HepG2 (cell line): ENCODE measurements at regions of chr1 and their contacts with region 1.

Region 1: GRCh38 chr1:227437495-227438008 is 119.3 kb upstream of the CDC42BPA start:
- DNase-seq: peak; percentile 25
- ATAC-seq: peak; percentile 67; the same call in 2 of the 3 replicates
- H3K4me3 ChIP-seq: peak overlapping the region in 1 of 3 experiments; percentile 37; a peak in 1 of 6 replicates
- H3K27ac ChIP-seq: no peak overlapping the region
- H3K4me1 ChIP-seq: peaks cover 8% of the 10 kb centered on the region; the same call in 1 of the 2 replicates
- H3K27me3 ChIP-seq: peaks cover 0 to 17% of the 10 kb centered on the region in 2 experiments; a peak in 1 of 5 replicates
- CTCF ChIP-seq: peak; percentile 65
- EP300 ChIP-seq: no peak
- POLR2A ChIP-seq: no peak
- RAD21 ChIP-seq: peak; percentile 49; the same call in 1 of the 2 replicates

Region 2: GRCh38 chr1:226634166-226634588 is 803.4 kb before region 1 on chr1:
- CTCF ChIA-PET with region 1: interaction called, 5 read pairs
- POLR2A ChIA-PET with region 1: no interaction called
- in situ Hi-C with region 1: loop called (anchors 10 kb)
- intact Hi-C with region 1: loop called (anchors 10 kb)
- DNase-seq: peak; percentile 35
- ATAC-seq: peak; percentile 90
- H3K4me3 ChIP-seq: no peak overlapping the region
- H3K27ac ChIP-seq: no peak overlapping the region
- H3K4me1 ChIP-seq: no peaks in the 10 kb centered on the region
- H3K27me3 ChIP-seq: peaks cover 0 to 57% of the 10 kb centered on the region in 2 experiments; a peak in 4 of 5 replicates
- CTCF ChIP-seq: peak; percentile 88
- EP300 ChIP-seq: no peak
- POLR2A ChIP-seq: no peak
- RAD21 ChIP-seq: peak; percentile 71

Region 3: DNA sequence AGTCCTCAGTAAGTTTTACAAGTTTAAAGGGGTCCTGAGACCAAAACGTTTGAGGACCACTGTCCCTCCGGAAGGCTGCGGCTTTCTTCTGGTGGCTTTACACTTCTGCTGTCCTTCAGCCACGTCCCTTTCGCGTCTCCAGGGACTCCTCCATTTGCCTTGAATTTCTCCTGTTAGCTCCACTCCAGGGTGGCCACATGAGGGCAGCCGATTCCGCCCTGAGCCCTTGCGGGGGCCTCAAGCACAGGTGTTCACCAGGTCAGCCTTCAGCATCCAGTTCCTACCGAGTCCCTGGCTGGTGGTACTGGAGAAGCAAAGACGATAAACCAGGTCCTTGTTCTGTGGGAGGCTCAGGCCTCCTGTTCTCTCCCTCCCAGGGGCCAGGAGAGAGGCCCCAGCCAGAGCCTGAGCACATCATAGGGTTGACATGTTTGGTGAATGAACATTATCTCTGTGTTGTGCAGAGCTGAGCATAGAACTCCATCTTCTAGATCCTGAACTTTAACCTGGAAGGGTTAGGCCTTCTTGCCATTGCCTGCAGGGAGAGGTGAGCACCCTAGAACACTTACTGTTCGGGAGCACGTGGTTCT is 524.9 kb before region 1 on chr1:
- CTCF ChIA-PET with region 1: interaction called, 6 read pairs
- POLR2A ChIA-PET with region 1: no interaction called
- in situ Hi-C with region 1: loop called (anchors 5 kb)
- intact Hi-C with region 1: loop called (anchors 5 kb)
- DNase-seq: peak; percentile 76
- ATAC-seq: peak; percentile 100
- H3K4me3 ChIP-seq: no peak overlapping the region
- H3K27ac ChIP-seq: no peak overlapping the region
- H3K4me1 ChIP-seq: peaks cover 7% of the 10 kb centered on the region
- H3K27me3 ChIP-seq: no peaks in the 10 kb centered on the region
- CTCF ChIP-seq: peak; percentile 100
- EP300 ChIP-seq: no peak
- POLR2A ChIP-seq: no peak
- RAD21 ChIP-seq: peak; percentile 93

Region 4: GRCh38 chr1:227131193-227131592 is 306.4 kb before region 1 on chr1:
- CTCF ChIA-PET with region 1: interaction called, 5 read pairs
- POLR2A ChIA-PET with region 1: no interaction called
- in situ Hi-C with region 1: no loop called
- intact Hi-C with region 1: loop called (anchors 1 kb)
- DNase-seq: peak; percentile 30
- ATAC-seq: peak; percentile 65; the same call in 2 of the 3 replicates
- H3K4me3 ChIP-seq: no peak overlapping the region
- H3K27ac ChIP-seq: no peak overlapping the region
- H3K4me1 ChIP-seq: no peaks in the 10 kb centered on the region
- H3K27me3 ChIP-seq: no peaks in the 10 kb centered on the region
- CTCF ChIP-seq: peak; percentile 31
- EP300 ChIP-seq: no peak
- POLR2A ChIP-seq: no peak
- RAD21 ChIP-seq: no peak

Region 5: GRCh38 chr1:227234998-227235405 is 202.6 kb before region 1 on chr1:
- CTCF ChIA-PET with region 1: interaction called, 4 read pairs
- POLR2A ChIA-PET with region 1: no interaction called
- in situ Hi-C with region 1: loop called (anchors 5 kb)
- intact Hi-C with region 1: loop called (anchors 1 kb)
- DNase-seq: peak; percentile 83
- ATAC-seq: peak; percentile 97
- H3K4me3 ChIP-seq: no peak overlapping the region
- H3K27ac ChIP-seq: no peak overlapping the region
- H3K4me1 ChIP-seq: no peaks in the 10 kb centered on the region
- H3K27me3 ChIP-seq: no peaks in the 10 kb centered on the region
- CTCF ChIP-seq: peak; percentile 71
- EP300 ChIP-seq: no peak
- POLR2A ChIP-seq: no peak
- RAD21 ChIP-seq: peak; percentile 52; the same call in 1 of the 2 replicates

Region 6: GRCh38 chr1:227318003-227318852 is 119.3 kb before region 1 on chr1 and contains the start of gene CDC42BPA:
- CTCF ChIA-PET with region 1: no interaction called
- POLR2A ChIA-PET with region 1: no interaction called
- in situ Hi-C with region 1: loop called (anchors 5 kb)
- intact Hi-C with region 1: loop called (anchors 5 kb)
- DNase-seq: peak; percentile 46
- ATAC-seq: peak; percentile 85
- H3K4me3 ChIP-seq: peak within 1 kb of the TSS; percentile 89 to 96 (median 91)
- H3K27ac ChIP-seq: peak within 1 kb of the TSS; percentile 78
- H3K4me1 ChIP-seq: peaks cover 9% of the 10 kb centered on the region
- H3K27me3 ChIP-seq: peaks cover 0 to 17% of the 10 kb centered on the region in 2 experiments; a peak in 3 of 5 replicates
- CTCF ChIP-seq: no peak
- EP300 ChIP-seq: no peak
- POLR2A ChIP-seq: peak in 1 of 2 experiments; percentile 62; a peak in 3 of 4 replicates
- RAD21 ChIP-seq: peak; percentile 65
- total RNA-seq, gene CDC42BPA: 15.4 and 16.0 TPM in 2 replicates

Region 7: GRCh38 chr1:227449051-227449450 is 11.5 kb after region 1 on chr1:
- CTCF ChIA-PET with region 1: no interaction called
- POLR2A ChIA-PET with region 1: no interaction called
- in situ Hi-C with region 1: no loop called
- intact Hi-C with region 1: no loop called
- DNase-seq: peak; percentile 45
- ATAC-seq: peak; percentile 60
- H3K4me3 ChIP-seq: no peak overlapping the region
- H3K27ac ChIP-seq: no peak overlapping the region
- H3K4me1 ChIP-seq: no peaks in the 10 kb centered on the region
- H3K27me3 ChIP-seq: peaks cover 0 to 6% of the 10 kb centered on the region in 2 experiments; a peak in 2 of 5 replicates
- CTCF ChIP-seq: peak; percentile 50
- EP300 ChIP-seq: no peak
- POLR2A ChIP-seq: no peak
- RAD21 ChIP-seq: no peak